CD4-positive, alpha-beta T cell (primary cell): ENCODE measurements at regions of chr19 and their contacts with region 1.

Region 1: DNA sequence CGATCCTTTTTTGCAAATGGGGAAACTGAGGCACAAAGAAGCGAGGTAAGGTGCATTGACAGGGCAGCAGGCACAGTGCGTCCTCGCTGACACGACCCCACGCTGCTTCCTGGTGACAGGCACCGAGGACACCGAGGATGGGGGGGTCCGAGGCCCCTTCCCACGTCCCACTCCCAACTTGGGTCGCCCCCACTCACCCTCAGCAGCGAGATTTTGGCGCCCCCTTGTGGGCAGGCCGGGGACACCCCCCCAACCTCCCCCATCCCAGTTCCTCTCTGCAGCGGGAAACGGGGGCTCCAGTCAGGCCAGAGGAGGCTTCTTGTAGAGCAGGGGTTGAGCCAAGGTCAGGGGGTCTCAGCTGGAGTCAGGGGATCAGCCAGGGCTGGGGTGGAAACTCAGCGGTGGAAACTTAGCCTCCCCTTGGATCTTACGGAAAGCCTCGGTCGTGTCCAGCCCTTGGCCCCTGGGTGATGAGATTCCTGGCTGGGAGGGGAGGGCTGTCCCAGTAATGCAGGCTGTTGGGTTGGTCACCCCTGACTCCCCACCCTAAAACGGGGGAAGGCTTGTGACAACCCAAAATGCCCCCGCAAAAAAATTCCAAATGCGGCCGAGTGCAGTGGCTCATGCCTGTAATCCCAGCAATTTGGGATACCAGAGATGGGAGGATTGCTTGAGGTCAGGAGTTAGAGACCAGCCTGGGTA is 8.2 kb downstream of the SMIM24 start:
- DNase-seq: peak in 13 of 14 experiments; percentile 11 to 61 (median 30)
- ATAC-seq: no peak
- H3K4me3 ChIP-seq: no peak overlapping the region
- H3K4me3 Mint-ChIP-seq: no peak overlapping the region
- H3K27ac ChIP-seq: no peak overlapping the region
- H3K27ac Mint-ChIP-seq: no peak overlapping the region
- H3K4me1 ChIP-seq: no peaks in the 10 kb centered on the region
- H3K4me1 Mint-ChIP-seq: no peaks in the 10 kb centered on the region
- H3K27me3 ChIP-seq: no peaks in the 10 kb centered on the region
- H3K27me3 Mint-ChIP-seq: no peaks in the 10 kb centered on the region
- CTCF ChIP-seq: peak; percentile 67

Region 2: GRCh38 chr19:3304871-3305423 is 167.2 kb before region 1 on chr19:
- CTCF ChIA-PET with region 1: no interaction called
- POLR2A ChIA-PET with region 1: no interaction called
- intact Hi-C with region 1: loop called in 1 of 2 experiments (anchors 1 kb)
- DNase-seq: peak; percentile 64 to 88 (median 74)
- ATAC-seq: peak; percentile 70
- H3K4me3 ChIP-seq: no peak overlapping the region
- H3K4me3 Mint-ChIP-seq: no peak overlapping the region
- H3K27ac ChIP-seq: no peak overlapping the region
- H3K27ac Mint-ChIP-seq: no peak overlapping the region
- H3K4me1 ChIP-seq: peaks cover 8% of the 10 kb centered on the region
- H3K4me1 Mint-ChIP-seq: no peaks in the 10 kb centered on the region
- H3K27me3 ChIP-seq: peaks cover 0 to 7% of the 10 kb centered on the region in 2 experiments
- H3K27me3 Mint-ChIP-seq: peaks cover 35% of the 10 kb centered on the region
- CTCF ChIP-seq: peak; percentile 88

Region 3: DNA sequence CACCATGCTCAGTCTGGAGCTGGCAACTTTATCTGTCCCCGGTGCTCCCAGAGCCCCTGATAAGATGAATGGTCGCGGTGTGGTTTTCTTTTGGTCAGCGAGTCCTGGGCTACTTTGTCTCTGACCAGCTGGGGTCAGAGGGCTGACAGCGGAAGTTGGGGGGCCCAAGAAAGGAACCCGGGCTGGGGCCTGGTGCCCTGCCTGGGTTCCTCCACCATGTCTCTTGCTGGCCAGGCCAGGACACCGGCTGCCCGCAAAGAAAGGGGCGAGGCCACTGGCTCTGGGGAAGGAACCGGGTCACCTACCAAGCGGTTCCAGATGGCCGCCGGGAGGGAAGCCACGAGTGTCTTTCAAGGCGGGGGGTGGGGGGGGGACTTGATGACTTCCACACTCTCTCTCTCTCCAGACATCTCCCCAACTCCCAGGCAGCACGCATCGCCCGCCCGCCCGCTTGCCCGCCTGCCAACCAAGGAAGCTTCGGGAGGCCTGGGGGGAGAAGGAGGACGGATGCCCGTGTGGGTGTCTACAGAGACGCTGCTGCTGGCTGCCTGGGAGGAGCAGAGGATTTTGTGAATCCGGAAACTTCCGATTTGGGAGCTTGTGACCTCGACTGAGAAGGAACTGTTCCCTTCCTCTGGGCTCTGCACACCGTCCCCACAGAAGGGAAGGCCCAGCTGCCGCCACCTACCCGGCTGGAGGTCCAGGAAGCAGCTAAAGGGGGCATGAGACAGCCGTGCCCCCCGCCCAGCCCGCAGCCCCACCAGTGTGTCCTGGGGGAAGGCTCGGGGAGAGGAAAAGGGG is 227.1 kb after region 1 on chr19:
- CTCF ChIA-PET with region 1: no interaction called
- POLR2A ChIA-PET with region 1: no interaction called
- intact Hi-C with region 1: no loop called
- DNase-seq: peak in 3 of 14 experiments; percentile 34 to 61 (median 59)
- ATAC-seq: peak; percentile 7
- H3K4me3 ChIP-seq: peak overlapping the region; percentile 72
- H3K4me3 Mint-ChIP-seq: peak overlapping the region; percentile 91
- H3K27ac ChIP-seq: no peak overlapping the region
- H3K27ac Mint-ChIP-seq: peak overlapping the region; percentile 73
- H3K4me1 ChIP-seq: peaks cover 37% of the 10 kb centered on the region
- H3K4me1 Mint-ChIP-seq: peaks cover 27% of the 10 kb centered on the region
- H3K27me3 ChIP-seq: no peaks in the 10 kb centered on the region
- H3K27me3 Mint-ChIP-seq: no peaks in the 10 kb centered on the region
- CTCF ChIP-seq: no peak